WTC11 (cell line): ENCODE measurements at regions of chr6 and their contacts with region 1.

Region 1: DNA sequence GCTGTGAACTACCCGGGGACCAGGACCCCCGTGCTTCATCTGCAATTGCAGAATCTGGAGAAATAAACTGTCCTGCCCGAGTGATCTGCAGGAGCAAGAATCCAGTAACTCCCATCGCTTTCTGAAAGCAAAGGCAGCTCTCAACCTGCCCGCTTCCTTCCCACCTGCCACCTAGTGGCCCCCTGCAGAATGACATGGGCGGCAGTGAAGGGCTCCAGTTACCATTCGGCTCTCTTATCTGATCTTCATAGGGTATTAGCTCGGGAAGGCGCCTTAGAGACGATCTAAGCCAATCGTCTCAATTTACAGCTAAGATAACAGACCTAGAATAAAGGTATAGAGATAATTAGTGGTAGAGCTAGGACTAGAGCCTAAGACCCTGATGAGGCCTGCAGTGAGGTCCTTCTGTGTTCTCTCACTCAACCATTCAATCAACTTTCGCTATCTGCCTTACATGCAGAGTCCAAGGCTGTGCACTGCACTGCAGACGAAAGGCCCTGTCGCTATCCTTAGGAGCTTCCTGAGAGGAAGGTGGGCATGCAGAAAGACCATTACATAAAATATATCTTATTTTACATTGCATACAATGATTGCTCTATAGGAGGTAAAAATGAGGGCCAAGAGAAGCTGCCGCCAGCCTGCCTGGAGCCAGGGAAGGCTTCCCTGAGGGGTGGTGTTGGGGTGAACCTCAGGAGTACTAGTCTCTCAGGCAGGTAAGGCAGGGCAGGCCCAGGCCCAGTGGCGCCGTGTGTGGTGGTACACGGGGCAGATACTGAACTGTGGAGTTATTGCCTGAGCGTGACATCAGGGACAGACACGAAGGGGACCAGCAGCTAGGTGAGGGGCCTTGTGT is 7.1 kb upstream of the PSMG4 start:
- DNase-seq: peak; percentile 91
- ATAC-seq: peak; percentile 92
- H3K4me3 Mint-ChIP-seq: no peak overlapping the region
- H3K27ac Mint-ChIP-seq: no peak overlapping the region
- H3K4me1 Mint-ChIP-seq: peaks cover 37% of the 10 kb centered on the region
- H3K27me3 Mint-ChIP-seq: peaks cover 17% of the 10 kb centered on the region
- CTCF ChIP-seq: peak; percentile 98

Region 2: GRCh38 chr6:3118353-3119039 is 133.2 kb before region 1 on chr6 and contains the start of gene BPHL:
- CTCF ChIA-PET with region 1: interaction called, 13 read pairs
- POLR2A ChIA-PET with region 1: no interaction called
- DNase-seq: peak; percentile 98
- ATAC-seq: peak; percentile 93
- H3K4me3 Mint-ChIP-seq: peak within 1 kb of the TSS; percentile 71
- H3K27ac Mint-ChIP-seq: peak within 1 kb of the TSS; percentile 97
- H3K4me1 Mint-ChIP-seq: peaks cover 26% of the 10 kb centered on the region
- H3K27me3 Mint-ChIP-seq: no peaks in the 10 kb centered on the region
- CTCF ChIP-seq: no peak
- total RNA-seq, gene BPHL: 29.7 to 45.5 TPM (median 43.2 TPM) in 3 replicates

Region 3: GRCh38 chr6:3157131-3157927 is 94.4 kb before region 1 on chr6 and contains the start of gene TUBB2A:
- CTCF ChIA-PET with region 1: interaction called, 30 read pairs
- POLR2A ChIA-PET with region 1: interaction called, 4 read pairs
- DNase-seq: peak; percentile 79
- ATAC-seq: peak; percentile 75
- H3K4me3 Mint-ChIP-seq: peak within 1 kb of the TSS; percentile 97
- H3K27ac Mint-ChIP-seq: peak within 1 kb of the TSS; percentile 74; the same call in 1 of the 2 replicates
- H3K4me1 Mint-ChIP-seq: peaks cover 53% of the 10 kb centered on the region
- H3K27me3 Mint-ChIP-seq: no peaks in the 10 kb centered on the region
- CTCF ChIP-seq: no peak
- total RNA-seq, gene TUBB2A: 357 to 403 TPM (median 394 TPM) in 3 replicates

Region 4: DNA sequence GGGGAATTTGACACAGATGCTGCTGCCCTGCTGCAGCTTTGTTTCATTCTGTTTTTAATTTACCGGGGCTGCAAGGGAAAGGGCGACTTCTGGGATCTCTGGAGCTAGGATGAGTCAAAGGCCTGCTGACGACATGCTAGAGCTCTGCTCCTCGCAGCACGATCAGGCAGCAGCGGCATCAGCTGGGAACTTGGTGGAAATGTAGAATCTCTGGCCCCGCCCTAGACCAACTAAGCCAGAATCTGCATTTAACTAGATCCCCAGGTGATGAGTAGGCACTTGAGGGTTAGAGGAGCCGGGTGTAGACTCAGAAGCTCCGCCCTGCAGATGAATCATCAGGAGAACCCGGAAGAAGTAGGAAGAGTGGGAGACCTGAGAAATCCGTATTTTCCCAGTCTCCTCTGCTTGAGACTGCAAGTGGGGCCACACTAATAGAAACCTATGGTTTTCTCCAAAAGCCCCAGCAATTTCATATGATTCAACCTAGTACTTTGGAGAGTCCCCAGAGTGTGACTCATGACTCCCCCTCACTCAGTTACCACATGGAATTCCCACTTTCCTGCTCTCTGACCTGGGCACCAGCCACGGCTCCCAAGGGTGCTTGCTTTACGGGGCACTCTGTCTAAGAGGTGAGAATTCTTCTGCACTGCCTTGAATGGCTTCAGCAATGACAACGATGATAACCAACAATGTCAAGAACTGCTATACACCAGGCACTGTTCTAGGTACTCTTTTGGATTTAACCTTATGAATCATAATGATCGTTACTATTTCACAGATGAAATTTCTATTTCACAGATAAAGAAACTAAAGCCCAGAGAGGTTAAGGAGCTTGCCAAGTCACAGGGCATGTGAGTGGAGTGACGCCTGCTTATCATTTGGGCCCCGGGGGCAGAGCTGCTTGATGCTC is 42.3 kb before region 1 on chr6:
- CTCF ChIA-PET with region 1: interaction called, 22 read pairs
- POLR2A ChIA-PET with region 1: no interaction called
- DNase-seq: peak; percentile 79
- ATAC-seq: peak; percentile 98
- H3K4me3 Mint-ChIP-seq: peak overlapping the region; percentile 40
- H3K27ac Mint-ChIP-seq: peak overlapping the region; percentile 80
- H3K4me1 Mint-ChIP-seq: peaks cover 27% of the 10 kb centered on the region
- H3K27me3 Mint-ChIP-seq: no peaks in the 10 kb centered on the region
- CTCF ChIP-seq: no peak

Region 5: GRCh38 chr6:3239110-3239830 is 12.4 kb before region 1 on chr6:
- CTCF ChIA-PET with region 1: interaction called, 66 read pairs
- POLR2A ChIA-PET with region 1: no interaction called
- DNase-seq: peak; percentile 49
- ATAC-seq: peak; percentile 91
- H3K4me3 Mint-ChIP-seq: no peak overlapping the region
- H3K27ac Mint-ChIP-seq: no peak overlapping the region
- H3K4me1 Mint-ChIP-seq: peaks cover 16% of the 10 kb centered on the region
- H3K27me3 Mint-ChIP-seq: peaks cover 3% of the 10 kb centered on the region; the same call in 1 of the 2 replicates
- CTCF ChIP-seq: no peak

Region 6: DNA sequence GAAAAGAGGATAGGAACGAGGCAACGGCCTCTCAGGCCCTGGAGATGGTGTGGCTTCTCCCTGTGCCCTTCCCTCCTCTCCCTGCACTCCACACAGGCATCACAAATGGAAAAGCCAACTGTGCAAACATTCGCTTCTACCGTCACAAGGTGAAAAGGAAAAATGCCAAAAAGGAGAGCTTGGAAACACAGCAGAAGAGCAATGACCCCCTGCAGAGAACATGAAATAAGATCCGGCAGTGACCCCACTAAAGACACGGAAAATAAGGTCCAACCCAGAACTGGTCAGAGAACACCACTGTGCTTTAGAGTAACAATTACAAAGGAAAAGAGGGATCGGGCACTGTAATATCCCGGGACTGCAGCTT is 142.1 kb after region 1 on chr6:
- CTCF ChIA-PET with region 1: no interaction called
- POLR2A ChIA-PET with region 1: no interaction called
- DNase-seq: no peak
- ATAC-seq: no peak
- H3K4me3 Mint-ChIP-seq: no peak overlapping the region
- H3K27ac Mint-ChIP-seq: peak overlapping the region; percentile 6; the same call in 1 of the 2 replicates
- H3K4me1 Mint-ChIP-seq: peaks cover 24% of the 10 kb centered on the region
- H3K27me3 Mint-ChIP-seq: no peaks in the 10 kb centered on the region
- CTCF ChIP-seq: no peak

Region 7: GRCh38 chr6:3444276-3445088 is 192.8 kb after region 1 on chr6:
- CTCF ChIA-PET with region 1: no interaction called
- POLR2A ChIA-PET with region 1: no interaction called
- DNase-seq: no peak
- ATAC-seq: peak; percentile 36
- H3K4me3 Mint-ChIP-seq: no peak overlapping the region
- H3K27ac Mint-ChIP-seq: peak overlapping the region; percentile 53
- H3K4me1 Mint-ChIP-seq: peaks cover 55% of the 10 kb centered on the region
- H3K27me3 Mint-ChIP-seq: no peaks in the 10 kb centered on the region
- CTCF ChIP-seq: no peak